OCI-LY7 (cell line): ENCODE measurements at regions of chr17 and their contacts with region 1.

Region 1: GRCh38 chr17:7252176-7253043 is at the start of gene ELP5:
- DNase-seq: peak; percentile 96
- H3K4me3 ChIP-seq: peak within 1 kb of the TSS; percentile 83
- H3K27ac ChIP-seq: peak within 1 kb of the TSS; percentile 71
- H3K4me1 ChIP-seq: peaks cover 26% of the 10 kb centered on the region
- CTCF ChIP-seq: peak; percentile 58
- total RNA-seq, gene ELP5: 71.7 and 84.6 TPM in 2 replicates

Region 2: DNA sequence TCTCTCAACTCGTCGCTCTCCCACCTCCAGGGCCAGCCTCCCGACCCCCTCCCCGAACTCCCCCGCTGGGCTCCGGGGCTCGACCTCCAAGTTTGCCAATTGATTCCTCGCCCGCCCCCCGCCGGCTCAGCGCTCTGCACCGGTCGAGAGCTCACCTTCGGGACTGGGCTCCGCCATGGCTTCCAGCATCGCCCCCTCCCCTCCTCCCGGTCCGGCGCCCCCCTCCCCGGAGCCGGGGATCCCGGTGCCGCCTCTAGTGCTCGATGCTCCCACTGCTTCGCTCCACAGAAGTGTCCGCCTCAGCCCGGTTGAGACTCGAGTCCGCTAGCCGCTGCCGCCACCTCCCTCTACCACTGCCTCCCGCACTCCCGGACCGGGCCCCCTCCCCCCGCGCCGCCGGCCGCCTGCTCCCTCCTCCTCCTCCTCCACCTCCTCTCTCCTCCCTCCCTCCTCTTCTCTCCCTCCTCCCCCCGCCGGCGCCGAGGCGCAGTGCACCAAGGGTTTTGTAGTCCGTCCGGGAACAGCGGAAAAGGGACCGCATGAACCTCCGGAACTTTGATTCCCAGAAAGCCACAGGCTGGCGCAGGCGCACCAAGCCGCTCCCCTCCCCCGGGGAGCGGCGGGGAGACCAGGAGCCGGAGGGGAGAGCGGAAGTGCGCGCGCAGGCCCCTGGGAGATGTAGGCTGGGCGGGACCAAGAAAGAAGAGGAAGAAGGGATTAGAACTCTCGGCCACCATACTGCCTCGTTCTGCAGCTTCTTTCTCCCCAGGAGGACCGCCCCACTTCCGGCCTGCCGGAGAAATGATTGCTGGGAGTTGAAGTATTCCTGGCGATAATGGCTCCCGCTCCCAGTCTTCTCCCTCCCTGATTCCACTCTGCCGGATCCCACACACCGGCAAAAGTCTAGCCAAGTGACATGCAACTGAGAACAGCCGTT is 13.1 kb before region 1 on chr17 and contains the start of gene PHF23:
- CTCF ChIA-PET with region 1: no interaction called
- POLR2A ChIA-PET with region 1: interaction called, 3 read pairs
- intact Hi-C with region 1: loop called (anchors 2 kb)
- DNase-seq: peak; percentile 99
- H3K4me3 ChIP-seq: peak within 1 kb of the TSS; percentile 100
- H3K27ac ChIP-seq: peak within 1 kb of the TSS; percentile 86
- H3K4me1 ChIP-seq: peaks cover 60% of the 10 kb centered on the region
- CTCF ChIP-seq: 0 out of 2 replicates have a peak, but pooled peaks have one; percentile 9
- total RNA-seq, gene PHF23: 47.7 and 50.8 TPM in 2 replicates

Region 3: GRCh38 chr17:7306911-7307686 is 54.7 kb after region 1 on chr17 and contains the start of gene EIF5A:
- CTCF ChIA-PET with region 1: no interaction called
- POLR2A ChIA-PET with region 1: interaction called, 3 read pairs
- intact Hi-C with region 1: loop called (anchors 2 kb)
- DNase-seq: peak; percentile 100
- H3K4me3 ChIP-seq: peak within 1 kb of the TSS; percentile 99
- H3K27ac ChIP-seq: peak within 1 kb of the TSS; percentile 95
- H3K4me1 ChIP-seq: peaks cover 38% of the 10 kb centered on the region
- CTCF ChIP-seq: no peak
- total RNA-seq, gene EIF5A: 491 and 519 TPM in 2 replicates

Region 4: GRCh38 chr17:7329374-7329996 is 77.1 kb after region 1 on chr17:
- CTCF ChIA-PET with region 1: no interaction called
- POLR2A ChIA-PET with region 1: no interaction called
- intact Hi-C with region 1: loop called (anchors 1 kb)
- DNase-seq: peak; percentile 100
- H3K4me3 ChIP-seq: peak overlapping the region; percentile 82
- H3K27ac ChIP-seq: peak overlapping the region; percentile 96
- H3K4me1 ChIP-seq: peaks cover 42% of the 10 kb centered on the region
- CTCF ChIP-seq: no peak

Region 5: GRCh38 chr17:7435221-7435675 is 182.8 kb after region 1 on chr17 and contains the start of gene TMEM102:
- CTCF ChIA-PET with region 1: no interaction called
- POLR2A ChIA-PET with region 1: no interaction called
- intact Hi-C with region 1: loop called (anchors 1 kb)
- DNase-seq: peak; percentile 99
- H3K4me3 ChIP-seq: peak within 1 kb of the TSS; percentile 76
- H3K27ac ChIP-seq: peak within 1 kb of the TSS; percentile 77
- H3K4me1 ChIP-seq: peaks cover 32% of the 10 kb centered on the region
- CTCF ChIP-seq: no peak
- total RNA-seq, gene TMEM102: 13.4 and 15.6 TPM in 2 replicates

Region 6: GRCh38 chr17:7484067-7484918 is 231.9 kb after region 1 on chr17 and contains the start of gene POLR2A:
- CTCF ChIA-PET with region 1: no interaction called
- POLR2A ChIA-PET with region 1: no interaction called
- intact Hi-C with region 1: loop called (anchors 5 kb)
- DNase-seq: peak; percentile 98
- H3K4me3 ChIP-seq: peak within 1 kb of the TSS; percentile 89
- H3K27ac ChIP-seq: peak within 1 kb of the TSS; percentile 90
- H3K4me1 ChIP-seq: peaks cover 38% of the 10 kb centered on the region
- CTCF ChIP-seq: no peak
- total RNA-seq, gene POLR2A: 76.6 and 84.2 TPM in 2 replicates

Region 7: DNA sequence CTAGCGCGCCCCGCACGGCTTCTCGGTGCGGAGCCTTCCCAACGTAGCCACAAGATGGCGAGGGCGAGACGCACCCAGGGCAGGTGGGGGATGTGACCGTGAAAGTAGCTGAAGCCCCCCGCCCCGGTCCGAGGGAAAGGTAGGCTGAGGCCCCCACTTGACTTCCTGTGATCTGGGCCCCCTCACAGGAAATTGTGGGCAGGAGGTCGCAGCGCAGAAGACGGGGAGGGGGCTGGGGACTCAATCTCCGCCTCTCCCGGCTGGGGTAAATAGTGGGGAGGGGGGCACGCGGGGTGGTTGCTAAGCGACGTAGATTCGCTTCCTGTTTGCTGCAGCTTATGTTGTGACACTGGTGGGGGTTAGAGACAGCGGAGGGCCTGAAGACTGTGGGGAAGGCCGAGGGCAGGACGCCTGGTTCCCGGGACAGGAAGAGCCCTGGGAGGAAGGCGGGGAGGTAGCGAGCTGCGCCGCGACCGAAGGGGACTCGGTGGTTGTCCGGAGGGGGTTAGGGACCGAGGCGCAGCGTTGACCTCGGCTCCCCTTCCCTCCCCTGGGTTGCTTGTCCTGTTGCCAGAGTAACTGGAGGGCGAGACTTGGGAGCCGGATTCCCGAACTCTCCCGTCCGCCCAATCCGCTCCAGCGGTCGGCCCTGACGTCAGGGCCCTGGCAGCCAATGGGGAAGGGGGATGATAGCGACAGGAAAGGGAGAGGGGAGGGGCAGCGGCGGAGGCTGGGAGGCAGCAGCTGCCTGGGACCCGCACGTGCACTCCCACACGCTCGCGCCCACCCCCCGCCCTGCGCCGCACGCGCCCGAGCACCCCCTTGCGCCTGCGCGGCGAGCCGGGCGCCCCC is 582.8 kb after region 1 on chr17:
- CTCF ChIA-PET with region 1: no interaction called
- POLR2A ChIA-PET with region 1: no interaction called
- intact Hi-C with region 1: loop called (anchors 5 kb)
- DNase-seq: peak; percentile 95
- H3K4me3 ChIP-seq: peak overlapping the region; percentile 78
- H3K27ac ChIP-seq: peak overlapping the region; percentile 91
- H3K4me1 ChIP-seq: peaks cover 40% of the 10 kb centered on the region
- CTCF ChIP-seq: peak; percentile 81

Region 8: DNA sequence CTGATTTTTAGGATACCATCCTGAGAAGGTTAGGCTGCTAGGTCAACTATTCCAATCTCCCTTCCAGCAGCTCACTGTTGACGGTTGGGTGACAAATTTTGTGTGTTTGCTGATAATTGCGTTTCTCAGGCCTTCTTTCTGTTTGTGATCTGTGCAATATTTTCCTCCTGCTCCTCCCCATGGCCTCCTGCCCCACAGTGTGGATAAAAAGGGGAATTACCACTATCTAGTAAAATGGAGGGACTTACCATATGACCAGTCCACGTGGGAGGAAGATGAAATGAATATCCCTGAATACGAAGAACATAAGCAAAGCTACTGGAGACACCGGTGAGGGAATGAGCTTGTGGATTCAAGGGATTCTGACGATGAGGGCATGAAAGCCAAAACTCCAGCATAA is 645.4 kb after region 1 on chr17:
- CTCF ChIA-PET with region 1: no interaction called
- POLR2A ChIA-PET with region 1: no interaction called
- intact Hi-C with region 1: no loop called
- DNase-seq: no peak
- H3K4me3 ChIP-seq: no peak overlapping the region
- H3K27ac ChIP-seq: no peak overlapping the region
- H3K4me1 ChIP-seq: no peaks in the 10 kb centered on the region
- CTCF ChIP-seq: peak; percentile 58